Right cardiac atrium (tissue), 5 donors: ENCODE measurements at regions of chr12 and their contacts with region 1.

Region 1: DNA sequence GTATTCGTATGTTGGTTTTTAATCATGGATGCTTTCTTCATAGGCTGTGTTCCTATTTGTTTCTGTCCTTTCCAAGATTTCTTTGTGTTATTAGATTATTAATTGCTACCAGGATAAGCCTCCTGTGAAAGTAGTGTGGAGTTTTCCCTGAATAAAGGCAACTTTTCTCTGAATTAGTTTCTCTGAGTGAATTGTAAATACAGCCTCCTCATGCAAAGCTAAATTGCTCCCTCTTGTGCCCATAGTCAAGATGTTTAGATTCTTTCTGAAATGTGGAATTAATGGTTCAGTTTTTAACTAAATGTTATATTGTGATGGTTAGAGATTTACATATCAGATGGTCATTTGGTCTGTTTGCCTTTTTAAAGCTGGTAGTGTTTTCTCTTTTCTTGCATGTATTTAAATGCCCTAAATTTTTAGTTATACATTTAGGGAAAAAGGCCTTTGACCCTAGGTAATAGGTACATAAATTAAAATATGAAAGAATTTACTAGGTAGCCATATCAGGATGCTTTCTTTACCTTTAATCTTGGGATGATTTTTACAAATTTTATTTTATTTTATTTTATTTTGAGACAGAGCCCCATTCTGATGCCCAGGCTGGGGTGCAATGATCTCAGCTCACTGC is 8.9 kb downstream of the APAF1 start:
- DNase-seq: no peak
- ATAC-seq: no peak
- H3K4me3 ChIP-seq: no peak overlapping the region
- H3K27ac ChIP-seq: no peak overlapping the region
- H3K4me1 ChIP-seq: no peaks in the 10 kb centered on the region
- H3K27me3 ChIP-seq: no peaks in the 10 kb centered on the region

Region 2: GRCh38 chr12:98519257-98519907 is 134.6 kb before region 1 on chr12:
- intact Hi-C with region 1: no loop called
- DNase-seq: no peak
- ATAC-seq: no peak
- H3K4me3 ChIP-seq: no peak overlapping the region
- H3K27ac ChIP-seq: no peak overlapping the region
- H3K4me1 ChIP-seq: peaks cover 3% of the 10 kb centered on the region
- H3K27me3 ChIP-seq: no peaks in the 10 kb centered on the region

Region 3: DNA sequence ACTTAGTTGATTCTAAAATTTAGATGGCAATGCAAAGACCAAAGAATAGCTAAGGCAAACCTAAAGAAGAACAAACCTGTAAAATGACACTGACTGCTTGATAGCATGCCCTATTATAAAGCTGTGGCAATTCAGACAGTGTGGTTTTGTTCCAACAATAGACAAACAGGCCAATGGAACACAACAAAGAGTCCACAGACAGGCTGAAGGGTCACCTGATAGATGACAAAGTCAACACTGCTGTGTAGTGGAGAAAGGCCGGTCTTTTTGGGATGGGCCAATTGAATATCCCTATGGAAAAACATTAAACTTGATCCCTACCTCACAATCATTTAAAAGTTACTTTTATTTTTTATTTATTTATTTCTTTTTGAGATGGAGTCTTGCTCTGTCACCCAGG is 94.3 kb before region 1 on chr12:
- intact Hi-C with region 1: loop called in 1 of 4 experiments (anchors 10 kb)
- DNase-seq: no peak
- ATAC-seq: no peak
- H3K4me3 ChIP-seq: no peak overlapping the region
- H3K27ac ChIP-seq: no peak overlapping the region
- H3K4me1 ChIP-seq: no peaks in the 10 kb centered on the region
- H3K27me3 ChIP-seq: no peaks in the 10 kb centered on the region

Region 4: GRCh38 chr12:98572010-98572409 is 82.0 kb before region 1 on chr12:
- intact Hi-C with region 1: loop called in 3 of 4 experiments (anchors 5 to 10 kb)
- DNase-seq: no peak
- ATAC-seq: no peak
- H3K4me3 ChIP-seq: no peak overlapping the region
- H3K27ac ChIP-seq: no peak overlapping the region
- H3K4me1 ChIP-seq: no peaks in the 10 kb centered on the region
- H3K27me3 ChIP-seq: no peaks in the 10 kb centered on the region